ENCODE measurements at regions of chr5 and their contacts with region 1.

Region 1: DNA sequence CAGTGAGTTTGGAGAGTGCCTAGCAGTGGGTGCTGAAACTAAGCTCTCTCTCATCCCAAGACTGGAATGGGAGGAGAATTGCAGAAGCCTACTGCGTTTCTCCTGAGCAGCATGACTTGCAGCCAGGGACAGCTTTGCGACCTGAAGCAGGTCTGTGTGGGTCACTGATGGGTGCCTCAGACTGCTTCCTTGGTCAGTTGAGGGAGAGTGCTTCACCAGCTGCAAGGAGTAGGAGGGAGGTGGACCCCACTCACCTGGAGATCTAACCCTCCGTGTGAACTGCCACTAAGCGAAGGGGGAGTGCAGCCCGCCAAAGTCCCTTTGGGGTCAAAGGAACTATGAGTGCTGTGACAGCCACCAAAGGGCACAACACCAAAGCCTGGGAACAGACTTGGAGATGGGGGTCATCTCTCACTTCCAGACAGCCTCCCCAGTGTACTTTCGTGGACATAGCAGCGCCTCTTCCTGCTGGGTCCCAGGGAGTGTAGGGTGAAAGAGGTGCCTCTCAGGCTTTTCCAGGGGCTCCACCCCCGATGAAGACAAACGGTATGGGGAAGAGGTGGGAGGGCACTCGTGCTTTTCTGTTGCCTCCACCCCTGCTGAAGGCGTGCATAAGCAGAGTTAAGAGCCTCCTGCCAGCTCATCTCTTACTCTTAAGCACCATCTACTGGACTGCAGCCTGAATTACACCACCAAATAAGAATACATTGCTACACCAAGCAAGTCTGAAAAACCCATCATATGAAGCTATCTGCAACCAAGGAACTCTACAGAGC is 34.3 kb upstream of the MACIR start:
- DNase-seq: peak; percentile 66
- H3K4me3 ChIP-seq: no peak overlapping the region
- H3K27ac ChIP-seq: no peak overlapping the region
- H3K4me1 ChIP-seq: no peaks in the 10 kb centered on the region
- CTCF ChIP-seq: peak; percentile 81

Region 2: DNA sequence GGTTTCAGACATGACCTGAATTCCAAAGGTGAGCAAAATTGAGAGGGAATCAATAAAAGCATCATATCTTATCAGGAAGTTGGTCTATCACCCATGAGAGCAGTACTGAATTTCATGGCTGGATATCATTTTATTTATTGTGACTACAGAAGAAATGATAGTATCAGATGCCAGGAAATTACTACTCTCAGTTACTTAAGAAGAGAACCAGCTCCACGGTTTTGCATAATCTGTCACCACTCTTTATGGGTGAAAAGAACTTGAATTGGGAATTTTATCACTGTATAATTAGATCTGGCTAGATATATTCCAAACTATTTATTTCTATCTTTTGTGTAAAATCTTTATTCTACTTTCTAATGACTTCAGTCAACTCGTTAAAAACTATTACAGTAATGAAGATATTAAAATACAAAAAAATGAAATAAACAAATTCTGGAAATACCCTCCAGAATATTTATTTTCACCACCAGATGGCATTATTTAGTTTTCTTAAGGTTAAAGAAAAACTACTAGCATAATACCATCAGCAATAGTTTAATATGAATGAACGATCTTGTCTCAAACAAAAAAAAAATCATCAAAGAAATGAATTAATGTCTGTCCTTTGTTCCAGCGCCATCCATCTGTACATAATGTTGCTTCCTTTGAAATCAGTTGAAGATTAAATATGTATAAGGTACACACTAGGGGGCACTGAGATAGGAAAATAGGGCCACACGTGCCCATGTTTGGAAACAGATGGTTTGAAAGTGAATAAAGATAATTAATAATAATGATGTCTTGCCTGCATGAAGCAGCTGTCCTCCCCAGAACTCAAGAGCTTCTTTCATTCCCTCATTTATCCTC is 640.8 kb before region 1 on chr5:
- CTCF ChIA-PET with region 1: no interaction called
- POLR2A ChIA-PET with region 1: no interaction called
- intact Hi-C with region 1: loop called (anchors 2 kb)
- DNase-seq: peak; percentile 8
- H3K4me3 ChIP-seq: no peak overlapping the region
- H3K27ac ChIP-seq: no peak overlapping the region
- H3K4me1 ChIP-seq: no peaks in the 10 kb centered on the region
- CTCF ChIP-seq: peak; percentile 76

Region 3: DNA sequence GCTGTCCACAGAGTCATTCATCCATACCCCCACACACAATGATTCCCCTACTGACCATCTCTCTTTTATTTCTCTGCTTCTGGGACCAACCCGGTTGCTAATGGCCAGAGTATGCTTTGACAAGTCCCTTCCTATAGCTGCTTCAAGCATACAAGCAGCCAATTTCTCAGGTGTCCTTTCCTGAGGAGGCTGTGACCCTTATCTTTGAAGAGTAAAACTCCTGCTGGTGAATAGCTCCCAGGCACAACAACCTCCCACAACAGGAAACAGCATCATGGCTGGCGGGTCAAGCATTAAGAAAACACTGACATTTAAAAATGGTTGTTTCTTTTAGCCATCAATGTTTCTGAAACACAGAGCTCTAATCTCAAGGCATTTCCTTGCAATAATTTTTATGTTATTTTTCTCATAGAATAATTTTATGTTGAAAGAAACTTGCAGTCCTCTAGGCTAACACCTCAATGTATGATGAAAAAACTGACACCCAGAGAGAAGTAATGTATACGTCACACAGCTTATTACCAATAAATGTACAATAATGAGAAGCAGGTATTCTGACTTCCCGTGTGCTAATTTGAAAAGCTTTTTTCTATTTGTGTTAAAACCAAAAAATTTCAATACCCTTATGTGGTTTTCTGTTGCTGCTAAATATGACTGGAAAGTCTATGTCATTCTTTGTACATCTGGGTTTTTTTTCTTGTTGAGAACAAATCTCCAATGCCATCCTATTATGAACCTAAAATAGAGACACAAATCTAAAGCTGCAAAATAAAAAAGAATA is 476.7 kb before region 1 on chr5:
- CTCF ChIA-PET with region 1: no interaction called
- POLR2A ChIA-PET with region 1: no interaction called
- intact Hi-C with region 1: no loop called
- DNase-seq: no peak
- H3K4me3 ChIP-seq: no peak overlapping the region
- H3K27ac ChIP-seq: no peak overlapping the region
- H3K4me1 ChIP-seq: no peaks in the 10 kb centered on the region
- CTCF ChIP-seq: no peak

Measured in OCI-LY7 (cell line).